Caco-2 (cell line): ENCODE measurements at regions of chr2 and their contacts with region 1.

Region 1: DNA sequence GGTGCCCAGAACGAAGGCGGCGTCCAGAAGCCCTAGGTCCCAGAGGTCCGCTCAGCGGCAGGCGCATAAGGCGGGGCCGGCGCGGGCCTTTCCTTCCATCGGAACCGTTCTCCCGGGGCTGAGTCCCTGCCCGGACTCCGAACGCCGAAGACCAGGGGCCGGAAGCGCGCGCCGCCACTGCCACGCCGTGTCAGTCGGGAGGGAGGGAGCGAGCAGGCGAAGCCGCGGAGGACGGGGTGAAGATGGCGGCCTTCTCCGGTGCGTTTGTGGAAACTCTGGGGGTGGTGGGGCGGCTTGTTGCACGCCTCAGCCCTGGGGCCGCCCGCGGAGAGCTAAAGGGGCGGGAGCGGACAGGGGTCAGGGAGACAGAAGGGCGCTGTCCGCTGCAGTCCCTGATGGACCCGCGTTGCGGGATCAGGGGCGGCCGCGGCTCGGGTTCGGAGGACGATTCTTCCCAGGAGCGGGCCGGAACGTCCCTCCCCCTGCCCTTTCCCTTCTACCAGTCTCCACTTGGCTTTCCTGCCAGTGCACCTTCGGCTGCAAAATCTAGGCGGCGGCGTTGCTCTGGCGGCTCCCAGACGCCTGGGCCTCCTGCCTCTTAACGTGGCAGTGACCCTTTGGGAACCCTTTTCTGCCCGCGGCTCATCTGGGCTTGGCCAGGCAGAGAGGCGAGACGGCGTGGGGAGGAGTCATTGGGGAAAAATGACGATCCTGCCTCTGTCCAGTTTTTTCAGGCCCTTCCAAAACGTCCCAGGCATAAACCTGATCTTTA is at the start of gene DDX1:
- DNase-seq: peak; percentile 88 to 94
- H3K4me3 ChIP-seq: peak within 1 kb of the TSS; percentile 77
- H3K4me3 Mint-ChIP-seq: peak within 1 kb of the TSS; percentile 85
- H3K27ac Mint-ChIP-seq: peak within 1 kb of the TSS; percentile 93
- H3K4me1 ChIP-seq: peaks cover 4% of the 10 kb centered on the region; the same call in 1 of the 2 replicates
- H3K4me1 Mint-ChIP-seq: peaks cover 7% of the 10 kb centered on the region
- H3K27me3 ChIP-seq: no peaks in the 10 kb centered on the region
- H3K27me3 Mint-ChIP-seq: no peaks in the 10 kb centered on the region
- CTCF ChIP-seq: no peak
- total RNA-seq, gene DDX1: 145 and 163 TPM in 2 replicates

Region 2: GRCh38 chr2:14975381-14975780 is 616.5 kb before region 1 on chr2:
- CTCF ChIA-PET with region 1: no interaction called
- POLR2A ChIA-PET with region 1: no interaction called
- intact Hi-C with region 1: no loop called
- DNase-seq: no peak
- H3K4me3 ChIP-seq: no peak overlapping the region
- H3K4me3 Mint-ChIP-seq: no peak overlapping the region
- H3K27ac Mint-ChIP-seq: no peak overlapping the region
- H3K4me1 ChIP-seq: no peaks in the 10 kb centered on the region
- H3K4me1 Mint-ChIP-seq: no peaks in the 10 kb centered on the region
- H3K27me3 ChIP-seq: no peaks in the 10 kb centered on the region
- H3K27me3 Mint-ChIP-seq: peaks cover 11% of the 10 kb centered on the region
- CTCF ChIP-seq: no peak

Region 3: DNA sequence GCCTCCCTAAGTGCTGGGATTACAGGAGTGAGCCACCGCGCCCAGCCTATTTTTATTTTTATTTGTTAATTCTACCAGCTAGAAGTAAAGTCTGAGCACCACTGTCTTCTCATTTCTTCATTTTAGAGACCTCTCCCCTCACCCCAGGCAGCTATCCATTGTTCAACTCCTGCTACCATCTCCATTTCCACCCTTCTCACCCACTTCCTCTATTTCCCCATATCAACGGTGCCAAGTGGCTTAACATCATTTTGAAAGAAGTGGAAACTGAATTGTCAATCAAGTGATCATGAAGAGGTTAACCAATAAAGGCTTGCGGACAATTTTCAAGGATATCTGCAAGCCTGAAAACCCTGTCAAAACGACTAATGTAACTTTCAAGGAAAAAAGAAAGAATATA is 353.9 kb before region 1 on chr2:
- CTCF ChIA-PET with region 1: no interaction called
- POLR2A ChIA-PET with region 1: no interaction called
- intact Hi-C with region 1: no loop called
- DNase-seq: no peak
- H3K4me3 ChIP-seq: no peak overlapping the region
- H3K4me3 Mint-ChIP-seq: no peak overlapping the region
- H3K27ac Mint-ChIP-seq: no peak overlapping the region
- H3K4me1 ChIP-seq: 0 out of 2 replicates have a peak, but pooled peaks cover 5% of the 10 kb centered on the region
- H3K4me1 Mint-ChIP-seq: peaks cover under 1% of the 10 kb centered on the region
- H3K27me3 ChIP-seq: no peaks in the 10 kb centered on the region
- H3K27me3 Mint-ChIP-seq: no peaks in the 10 kb centered on the region
- CTCF ChIP-seq: no peak

Region 4: DNA sequence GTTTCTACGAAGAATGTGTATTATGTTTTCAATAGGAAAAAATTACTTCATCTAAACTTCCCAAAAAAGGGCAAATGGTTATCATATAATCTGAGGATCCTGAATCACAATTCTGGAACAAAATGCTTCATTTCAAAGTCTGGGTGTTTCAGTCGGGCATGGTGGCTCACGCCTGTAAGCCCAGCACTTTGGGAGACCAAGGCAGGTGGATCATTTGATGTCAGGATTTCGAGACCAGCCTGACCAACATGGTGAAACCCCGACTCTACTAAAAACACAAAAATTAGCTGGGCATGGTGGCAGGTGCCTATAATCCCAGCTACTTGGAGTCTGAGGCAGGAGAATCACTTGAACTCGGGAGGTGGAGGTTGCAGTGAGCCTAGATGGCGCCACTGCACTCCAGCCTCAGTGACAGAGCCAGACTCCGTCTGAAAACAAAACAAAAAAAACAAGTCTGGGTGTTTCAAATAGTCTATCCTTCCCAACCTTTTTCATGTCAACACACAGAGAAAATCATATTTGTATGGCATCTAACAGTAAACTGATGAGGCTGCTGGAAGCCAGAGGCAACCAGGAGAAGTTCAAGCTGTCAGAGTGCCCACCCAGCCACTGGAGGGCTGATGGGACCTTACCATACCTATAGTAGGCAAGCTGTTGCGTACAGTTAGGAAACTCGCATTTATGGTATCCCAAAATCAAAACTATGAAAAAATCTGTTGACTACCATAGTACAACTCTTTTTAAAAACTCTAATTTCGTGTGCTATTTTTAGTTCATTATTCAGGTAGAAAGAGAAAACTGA is 45.4 kb before region 1 on chr2:
- CTCF ChIA-PET with region 1: no interaction called
- POLR2A ChIA-PET with region 1: no interaction called
- intact Hi-C with region 1: loop called (anchors 2 kb)
- DNase-seq: peak in 1 of 2 experiments; percentile 29
- H3K4me3 ChIP-seq: no peak overlapping the region
- H3K4me3 Mint-ChIP-seq: no peak overlapping the region
- H3K27ac Mint-ChIP-seq: no peak overlapping the region
- H3K4me1 ChIP-seq: no peaks in the 10 kb centered on the region
- H3K4me1 Mint-ChIP-seq: no peaks in the 10 kb centered on the region
- H3K27me3 ChIP-seq: no peaks in the 10 kb centered on the region
- H3K27me3 Mint-ChIP-seq: no peaks in the 10 kb centered on the region
- CTCF ChIP-seq: peak; percentile 27 to 31

Region 5: GRCh38 chr2:15560988-15561573 is 30.8 kb before region 1 on chr2 and contains the start of gene NBAS:
- CTCF ChIA-PET with region 1: no interaction called
- POLR2A ChIA-PET with region 1: no interaction called
- intact Hi-C with region 1: loop called (anchors 1 kb)
- DNase-seq: peak; percentile 90 to 92
- H3K4me3 ChIP-seq: peak within 1 kb of the TSS; percentile 91
- H3K4me3 Mint-ChIP-seq: peak within 1 kb of the TSS; percentile 79
- H3K27ac Mint-ChIP-seq: peak within 1 kb of the TSS; percentile 69
- H3K4me1 ChIP-seq: peaks cover 10% of the 10 kb centered on the region
- H3K4me1 Mint-ChIP-seq: peaks cover 12% of the 10 kb centered on the region
- H3K27me3 ChIP-seq: no peaks in the 10 kb centered on the region
- H3K27me3 Mint-ChIP-seq: no peaks in the 10 kb centered on the region
- CTCF ChIP-seq: no peak
- total RNA-seq, gene NBAS: 28.8 and 31.1 TPM in 2 replicates

Region 6: GRCh38 chr2:15652801-15653200 is 60.9 kb after region 1 on chr2:
- CTCF ChIA-PET with region 1: no interaction called
- POLR2A ChIA-PET with region 1: no interaction called
- intact Hi-C with region 1: no loop called
- DNase-seq: no peak
- H3K4me3 ChIP-seq: no peak overlapping the region
- H3K4me3 Mint-ChIP-seq: no peak overlapping the region
- H3K27ac Mint-ChIP-seq: no peak overlapping the region
- H3K4me1 ChIP-seq: no peaks in the 10 kb centered on the region
- H3K4me1 Mint-ChIP-seq: peaks cover 4% of the 10 kb centered on the region
- H3K27me3 ChIP-seq: no peaks in the 10 kb centered on the region
- H3K27me3 Mint-ChIP-seq: no peaks in the 10 kb centered on the region
- CTCF ChIP-seq: no peak